ENCODE measurements at regions of chr1 and their contacts with region 1.

Region 1: GRCh38 chr1:164716992-164717703 is 158.2 kb downstream of the PBX1 start:
- DNase-seq: no peak
- ATAC-seq: no peak
- H3K4me3 ChIP-seq: no peak overlapping the region
- H3K27ac ChIP-seq: no peak overlapping the region
- H3K4me1 ChIP-seq: peaks cover 4 to 7% of the 10 kb centered on the region in 2 donors
- H3K27me3 ChIP-seq: no peaks in the 10 kb centered on the region

Region 2: DNA sequence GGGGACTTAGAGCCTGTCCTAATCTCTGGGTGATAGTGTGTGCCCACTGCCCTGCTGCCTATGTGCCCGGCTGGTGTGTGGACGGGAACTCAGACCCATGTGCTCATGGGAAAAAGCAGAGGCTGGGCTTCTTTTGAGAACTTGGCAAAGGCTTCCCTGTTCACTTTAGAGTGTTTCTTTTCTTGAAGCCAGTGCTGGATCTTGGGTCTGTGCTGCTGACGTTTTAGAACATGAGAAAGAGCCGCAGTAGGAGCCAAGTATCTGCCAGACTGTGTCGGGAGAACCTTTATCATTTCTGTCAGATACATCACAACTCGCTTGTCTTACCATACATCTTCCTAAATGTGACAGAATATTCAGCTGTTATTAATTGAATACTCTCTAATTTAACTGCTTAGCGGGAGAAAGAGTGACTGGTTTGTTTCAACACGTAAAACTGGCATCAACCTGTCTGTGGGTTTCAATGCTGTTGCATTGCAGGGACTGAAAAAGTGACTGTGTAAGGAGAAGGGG is 37.0 kb after region 1 on chr1:
- intact Hi-C with region 1: loop called (anchors 5 kb)
- DNase-seq: peak; percentile 54 to 76
- ATAC-seq: peak; percentile 81
- H3K4me3 ChIP-seq: peak overlapping the region; percentile 14 to 57
- H3K27ac ChIP-seq: peak overlapping the region in 1 of 2 donors; percentile 81
- H3K4me1 ChIP-seq: peaks cover 0 to 4% of the 10 kb centered on the region in 2 donors
- H3K27me3 ChIP-seq: no peaks in the 10 kb centered on the region

Region 3: DNA sequence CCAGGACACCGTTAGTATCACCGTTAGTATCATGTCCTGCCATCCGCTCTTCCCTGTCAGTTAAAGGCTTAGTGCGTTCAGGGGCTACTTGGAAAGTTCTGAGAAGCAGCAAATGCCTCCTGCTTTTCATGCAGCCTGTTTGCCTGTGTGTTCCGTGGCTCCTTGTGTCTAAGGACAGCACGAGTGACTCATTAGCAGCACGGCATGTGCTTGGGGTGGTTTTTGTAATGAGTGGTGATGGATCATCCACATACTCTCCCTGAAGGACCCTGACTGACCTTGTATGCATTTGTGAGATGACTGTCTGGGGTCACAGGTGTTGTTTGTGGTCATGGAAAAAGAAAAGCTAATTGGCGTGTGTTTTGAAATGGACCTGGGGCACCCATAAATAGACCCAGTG is 63.7 kb after region 1 on chr1:
- intact Hi-C with region 1: loop called in 1 of 2 experiments (anchors 5 kb)
- DNase-seq: no peak
- ATAC-seq: no peak
- H3K4me3 ChIP-seq: no peak overlapping the region
- H3K27ac ChIP-seq: no peak overlapping the region
- H3K4me1 ChIP-seq: peaks cover 0 to 7% of the 10 kb centered on the region in 2 donors
- H3K27me3 ChIP-seq: no peaks in the 10 kb centered on the region